ENCODE measurements at regions of chr13 and their contacts with region 1.

Region 1: DNA sequence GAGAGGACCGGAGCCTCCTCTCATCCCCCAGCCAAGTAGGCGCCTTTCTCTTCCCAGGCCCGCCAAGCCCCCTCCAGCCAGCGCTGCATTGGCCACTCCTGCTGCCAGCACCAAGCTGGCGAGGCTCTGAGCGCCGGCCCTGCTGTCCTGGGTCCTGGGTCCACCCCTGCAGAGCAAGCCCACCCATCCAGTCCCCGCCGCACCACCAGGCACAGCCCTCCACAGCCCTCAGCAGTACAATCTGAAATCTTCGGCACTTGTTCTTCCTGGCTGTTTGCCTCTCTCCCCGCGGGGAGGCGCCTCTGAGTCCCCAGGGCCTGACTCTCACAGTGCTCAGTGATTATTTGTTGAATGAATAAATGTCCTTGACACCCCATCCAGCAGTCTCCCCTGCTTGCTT is 236.4 kb upstream of the SGCG start:
- DNase-seq: no peak
- ATAC-seq: no peak
- H3K4me3 ChIP-seq: no peak overlapping the region
- H3K27ac ChIP-seq: no peak overlapping the region
- H3K4me1 ChIP-seq: no peaks in the 10 kb centered on the region
- H3K27me3 ChIP-seq: peaks cover 0 to 10% (median 0%) of the 10 kb centered on the region in 7 donors
- CTCF ChIP-seq: no peak

Region 2: GRCh38 chr13:22979092-22979491 is 34.7 kb after region 1 on chr13:
- intact Hi-C with region 1: no loop called
- DNase-seq: no peak
- ATAC-seq: no peak
- H3K4me3 ChIP-seq: no peak overlapping the region
- H3K27ac ChIP-seq: no peak overlapping the region
- H3K4me1 ChIP-seq: no peaks in the 10 kb centered on the region
- H3K27me3 ChIP-seq: peaks cover 0 to 12% (median 0%) of the 10 kb centered on the region in 7 donors
- CTCF ChIP-seq: no peak

Region 3: DNA sequence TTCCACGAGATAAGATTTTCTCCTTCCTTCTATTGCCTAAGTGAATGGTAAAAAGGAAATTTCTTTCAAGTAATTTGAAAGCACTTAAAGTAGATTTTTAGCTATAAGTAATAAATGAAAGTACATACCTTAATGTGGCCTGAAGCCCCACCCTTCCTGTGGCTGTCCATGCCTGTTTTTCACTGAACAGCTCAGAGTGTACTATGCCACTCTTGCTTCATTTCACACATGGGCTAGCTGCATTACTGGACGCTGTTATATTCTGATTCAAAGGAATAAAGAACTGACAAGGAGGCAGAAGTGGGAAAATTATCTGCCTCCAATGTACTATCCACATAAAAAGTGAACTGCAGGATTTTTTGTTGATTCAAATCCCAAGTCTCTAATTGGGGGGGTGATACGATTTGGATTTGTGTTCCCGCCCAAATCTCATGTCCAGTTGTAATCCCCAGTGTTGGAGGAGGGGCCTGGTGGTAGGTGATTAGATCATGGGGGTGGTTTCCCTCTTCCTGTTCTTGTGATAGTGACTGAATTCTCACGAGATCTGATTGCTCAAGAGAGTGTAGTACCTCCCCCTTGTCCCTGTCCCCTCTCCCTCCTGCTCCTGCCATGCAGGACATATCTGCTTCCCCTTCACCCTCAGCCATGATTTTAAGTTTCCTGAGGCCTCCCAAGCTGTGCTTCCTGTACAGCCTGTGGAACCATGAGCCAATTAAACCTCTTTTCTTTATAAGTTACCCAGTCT is 81.7 kb after region 1 on chr13:
- intact Hi-C with region 1: no loop called
- DNase-seq: no peak
- ATAC-seq: no peak
- H3K4me3 ChIP-seq: no peak overlapping the region
- H3K27ac ChIP-seq: no peak overlapping the region
- H3K4me1 ChIP-seq: no peaks in the 10 kb centered on the region
- H3K27me3 ChIP-seq: peaks cover 0 to 9% (median 0%) of the 10 kb centered on the region in 7 donors
- CTCF ChIP-seq: no peak

Region 4: DNA sequence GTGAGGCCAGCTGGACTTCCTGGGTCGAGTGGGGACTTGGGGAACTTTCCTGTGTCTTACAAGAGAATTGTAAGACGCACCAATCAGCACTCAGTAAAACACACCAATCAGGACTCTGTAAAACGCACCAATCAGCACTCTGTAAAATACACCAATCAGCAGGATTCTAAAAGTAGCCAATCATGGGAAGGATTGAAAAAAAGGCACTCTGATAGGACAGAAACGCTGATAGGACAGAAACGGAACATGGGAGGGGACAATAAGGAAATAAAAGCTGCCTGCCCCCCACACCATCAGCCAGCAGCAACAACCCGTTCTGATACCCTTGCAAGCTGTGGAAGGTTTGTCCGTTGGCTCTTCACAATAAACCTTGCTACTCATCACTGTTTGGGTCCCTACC is 163.3 kb after region 1 on chr13:
- intact Hi-C with region 1: no loop called
- DNase-seq: no peak
- ATAC-seq: no peak
- H3K4me3 ChIP-seq: no peak overlapping the region
- H3K27ac ChIP-seq: no peak overlapping the region
- H3K4me1 ChIP-seq: peaks cover 0 to 5% (median 0%) of the 10 kb centered on the region in 9 donors
- H3K27me3 ChIP-seq: no peaks in the 10 kb centered on the region
- CTCF ChIP-seq: no peak

Region 5: DNA sequence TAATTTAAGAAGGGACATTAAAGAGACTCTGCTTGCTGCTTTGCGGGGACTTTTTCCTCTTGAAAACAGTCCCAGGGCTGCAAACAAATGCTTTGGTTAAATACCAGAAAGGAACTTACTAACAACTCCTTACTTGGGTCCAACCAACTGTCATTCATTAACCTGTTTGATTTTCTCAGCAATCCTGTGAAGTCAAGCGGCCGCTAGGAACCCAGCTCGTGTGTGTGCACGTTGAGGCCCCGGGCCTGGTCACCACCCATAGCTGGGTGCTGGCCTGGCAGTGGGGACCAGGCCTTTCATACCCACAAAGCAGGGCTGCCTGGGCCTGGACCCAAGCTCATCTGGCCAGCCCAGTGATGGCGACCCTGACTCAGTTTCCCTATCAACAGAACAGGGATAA is 1415.7 kb after region 1 on chr13:
- intact Hi-C with region 1: loop called in 1 of 10 experiments (anchors 10 kb)
- DNase-seq: no peak
- ATAC-seq: no peak
- H3K4me3 ChIP-seq: no peak overlapping the region
- H3K27ac ChIP-seq: no peak overlapping the region
- H3K4me1 ChIP-seq: no peaks in the 10 kb centered on the region
- H3K27me3 ChIP-seq: peaks cover 0 to 9% (median 0%) of the 10 kb centered on the region in 7 donors
- CTCF ChIP-seq: no peak

Measured in heart right ventricle (tissue), 16 donors.